ENCODE measurements at regions of chr3 and their contacts with region 1.

Region 1: GRCh38 chr3:12841149-12841970 is at the start of gene RPL32:
- DNase-seq: peak; percentile 87
- CTCF ChIP-seq: peak; percentile 78

Region 2: DNA sequence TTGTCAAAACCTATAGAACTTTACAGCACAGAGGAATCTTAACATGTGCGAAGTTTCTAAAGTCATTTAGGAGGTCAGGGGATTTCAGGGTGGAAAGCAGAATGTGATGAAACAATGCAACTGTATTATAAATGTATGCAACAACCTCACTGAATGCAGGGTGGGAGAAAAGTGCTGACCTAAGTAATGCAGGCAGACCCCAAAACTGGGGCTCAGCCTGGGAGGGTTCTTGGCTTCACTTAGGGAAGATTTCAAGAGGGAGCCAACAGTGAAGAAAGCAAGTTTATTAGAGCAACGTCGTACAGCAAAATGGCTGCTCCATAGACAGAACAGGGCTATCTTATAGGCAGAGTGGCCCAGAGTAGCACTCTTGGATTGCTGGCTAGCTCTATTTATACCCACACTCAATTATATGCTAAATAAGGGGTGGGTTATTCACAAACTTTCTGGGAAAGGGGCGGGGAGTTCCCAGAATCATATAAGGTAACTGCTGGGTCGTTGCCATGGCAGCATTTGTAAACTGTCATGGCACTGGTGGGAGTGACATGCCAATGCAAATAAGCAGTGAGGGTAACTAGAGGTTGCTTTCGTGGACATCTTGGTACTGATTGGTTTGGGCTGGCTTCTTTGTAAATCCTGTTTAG is 59.1 kb before region 1 on chr3:
- CTCF ChIA-PET with region 1: interaction called, 12 read pairs
- POLR2A ChIA-PET with region 1: no interaction called
- DNase-seq: no peak
- CTCF ChIP-seq: no peak

Region 3: DNA sequence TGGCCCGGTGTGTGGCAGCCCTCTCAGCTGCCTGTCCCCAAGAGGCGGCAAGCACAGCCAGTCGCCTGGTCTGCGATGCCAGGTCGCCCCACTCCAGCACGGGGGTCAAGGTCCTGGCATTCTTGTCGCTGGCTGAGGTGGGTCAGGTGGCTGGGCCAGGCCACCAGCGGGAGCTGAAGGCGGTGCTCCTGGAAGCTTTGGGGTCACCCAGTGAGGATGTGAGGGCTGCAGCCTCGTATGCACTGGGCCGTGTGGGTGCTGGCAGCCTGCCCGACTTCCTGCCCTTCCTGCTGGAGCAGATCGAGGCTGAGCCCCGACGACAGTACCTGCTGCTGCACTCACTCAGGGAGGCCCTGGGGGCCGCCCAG is 24.0 kb before region 1 on chr3:
- CTCF ChIA-PET with region 1: interaction called, 23 read pairs
- POLR2A ChIA-PET with region 1: interaction called, 4 read pairs
- DNase-seq: no peak
- CTCF ChIP-seq: no peak

Region 4: DNA sequence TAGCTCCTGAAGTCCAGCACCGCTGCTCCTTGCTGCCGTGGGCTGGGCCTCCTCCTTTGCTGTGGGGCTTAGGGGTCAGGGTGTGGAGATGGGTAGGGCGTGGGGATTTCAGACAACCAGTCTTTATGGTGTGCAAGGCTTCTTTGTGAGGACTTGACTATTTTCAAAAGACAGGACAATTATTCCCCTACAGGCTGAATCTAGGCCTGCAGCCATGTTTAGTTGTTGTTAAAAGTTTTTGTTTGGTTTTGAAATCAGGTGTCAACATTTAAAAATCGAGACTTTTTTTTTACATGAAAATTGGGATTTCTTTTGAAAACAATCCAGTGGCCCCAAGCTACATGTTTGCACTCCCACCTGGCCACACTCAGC is 10.6 kb before region 1 on chr3:
- CTCF ChIA-PET with region 1: interaction called, 87 read pairs
- POLR2A ChIA-PET with region 1: interaction called, 18 read pairs
- DNase-seq: no peak
- CTCF ChIP-seq: no peak

Region 5: DNA sequence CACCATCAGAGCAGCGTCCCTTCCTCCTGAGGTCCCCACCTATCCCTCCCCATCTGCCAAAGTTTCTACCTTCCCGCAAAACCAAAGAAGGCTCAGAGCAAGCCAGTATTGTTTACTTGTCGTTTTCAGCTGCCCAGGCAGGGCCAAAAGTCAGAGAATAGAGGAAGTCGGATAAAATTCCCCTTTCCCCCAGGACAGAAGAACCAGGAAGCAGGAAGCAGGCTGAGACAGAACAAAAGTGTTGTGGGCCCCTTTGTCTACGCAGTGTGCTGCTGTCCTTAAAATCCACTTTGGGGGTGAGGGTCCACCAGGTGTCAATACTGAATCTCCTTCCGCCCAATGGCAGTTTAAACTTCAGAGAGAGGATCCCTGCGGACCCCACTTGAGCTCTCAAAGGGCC is 18.5 kb after region 1 on chr3:
- CTCF ChIA-PET with region 1: interaction called, 19 read pairs
- POLR2A ChIA-PET with region 1: no interaction called
- DNase-seq: no peak
- CTCF ChIP-seq: no peak

Region 6: DNA sequence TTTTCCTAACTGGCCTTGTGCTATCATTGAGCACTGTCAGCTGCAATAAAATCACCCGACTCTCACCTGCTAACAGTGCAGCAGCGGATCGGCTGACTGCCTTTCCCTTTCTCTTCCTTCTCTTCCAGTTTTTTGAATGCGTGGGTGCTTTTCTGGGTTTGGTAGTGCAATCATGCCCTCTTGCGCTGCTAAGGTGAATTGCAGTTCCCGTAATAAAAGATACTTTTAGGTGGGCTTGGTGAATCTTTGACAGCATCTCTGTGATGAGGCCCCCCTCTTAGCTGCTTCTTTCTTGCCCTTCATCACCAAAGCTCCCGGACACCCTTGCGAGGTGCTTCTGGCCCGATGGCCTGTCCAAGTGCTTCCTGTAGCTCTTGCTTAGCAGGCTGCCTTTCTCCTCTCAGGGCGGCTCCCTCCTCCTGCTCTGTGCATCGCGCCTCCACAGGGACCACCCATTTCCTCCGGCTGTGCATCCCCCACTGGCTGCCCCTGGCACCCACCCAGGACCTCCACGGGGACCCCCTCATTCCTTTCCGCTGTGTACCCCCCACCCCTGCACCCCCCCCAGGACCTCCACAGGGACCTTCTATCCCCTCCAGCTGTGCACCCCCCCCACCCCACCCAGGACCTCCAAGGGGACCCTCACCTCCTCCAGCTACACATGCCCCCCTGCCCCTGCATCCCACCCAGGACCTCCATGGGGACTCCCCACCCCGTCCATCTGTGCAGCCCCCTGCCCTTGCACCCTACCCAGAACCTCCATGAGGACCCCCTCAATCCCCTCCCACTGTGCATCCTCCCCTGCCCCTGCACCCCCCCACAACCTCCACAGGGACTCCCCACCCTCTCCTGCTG is 50.9 kb after region 1 on chr3:
- CTCF ChIA-PET with region 1: interaction called, 18 read pairs
- POLR2A ChIA-PET with region 1: no interaction called
- DNase-seq: peak; percentile 57
- CTCF ChIP-seq: peak; percentile 96

Region 7: GRCh38 chr3:12954891-12955650 is 113.7 kb after region 1 on chr3:
- CTCF ChIA-PET with region 1: no interaction called
- POLR2A ChIA-PET with region 1: no interaction called
- DNase-seq: no peak
- CTCF ChIP-seq: no peak

Measured in GM10248 (cell line).